ENCODE measurements at regions of chrX and their contacts with region 1.

Region 1: DNA sequence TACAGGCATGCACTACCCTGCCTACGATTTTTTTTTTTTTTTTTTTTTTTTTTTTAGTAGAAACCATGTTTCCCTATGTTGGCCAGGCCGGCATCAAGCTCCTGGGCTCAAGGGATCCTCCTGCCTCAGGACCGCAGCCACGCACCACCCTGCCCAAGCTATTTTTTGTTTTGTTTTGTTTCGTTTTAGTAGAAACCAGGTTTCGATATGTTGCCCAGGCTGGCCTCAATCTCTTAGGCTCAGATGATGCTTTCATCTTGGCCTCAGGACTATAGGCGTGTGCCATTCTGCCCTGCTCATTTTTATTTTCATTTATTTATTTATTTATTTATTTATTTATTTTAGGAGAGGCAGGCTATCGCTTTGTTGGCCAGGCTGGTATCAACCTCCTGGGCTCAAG is 1.2 kb upstream of the SSX3 start:
- DNase-seq: no peak
- H3K4me3 ChIP-seq: no peak overlapping the region
- H3K4me1 ChIP-seq: no peaks in the 10 kb centered on the region
- H3K27me3 ChIP-seq: no peaks in the 10 kb centered on the region; the same call in 1 of the 2 replicates

Region 2: DNA sequence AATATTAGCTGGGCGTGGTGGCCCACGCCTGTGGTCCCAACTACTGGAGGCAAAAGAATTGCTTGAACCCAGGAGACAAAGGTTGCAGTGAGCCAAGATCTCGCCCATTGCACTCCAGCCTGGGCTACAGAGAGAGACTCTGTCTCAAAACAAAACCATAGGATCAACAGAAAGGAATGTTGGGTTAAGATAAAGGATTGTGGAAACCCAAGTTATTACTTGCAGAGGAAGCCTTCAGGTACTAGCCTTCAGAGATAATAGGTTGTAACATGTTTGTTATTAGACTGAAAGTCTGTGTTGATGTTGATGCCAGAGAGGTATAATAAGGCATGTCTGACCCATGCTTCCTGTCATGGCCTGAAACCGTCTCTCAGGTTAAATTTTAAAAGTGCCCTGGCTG is 178.0 kb before region 1 on chrX:
- in situ Hi-C with region 1: no loop called
- DNase-seq: no peak
- H3K4me3 ChIP-seq: no peak overlapping the region
- H3K4me1 ChIP-seq: no peaks in the 10 kb centered on the region
- H3K27me3 ChIP-seq: no peaks in the 10 kb centered on the region

Region 3: DNA sequence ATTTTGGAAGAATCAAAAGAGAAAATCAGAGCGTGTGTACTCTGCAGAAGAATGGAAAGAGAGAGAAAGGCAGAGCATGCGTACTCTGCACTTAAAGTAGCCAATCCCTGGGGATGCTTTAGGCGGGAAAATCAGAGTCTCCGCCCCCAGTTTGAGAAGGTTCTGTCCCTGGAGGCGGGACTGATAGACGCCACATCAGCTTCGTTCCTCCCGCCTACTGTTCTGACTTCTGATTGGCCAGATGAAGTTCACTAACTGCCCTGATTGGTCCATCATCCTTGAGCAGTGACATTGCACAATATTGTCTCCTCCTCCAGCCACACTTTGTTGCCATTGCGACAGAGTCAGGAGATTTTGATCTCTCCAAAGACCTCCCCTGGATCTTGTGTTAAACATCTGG is 78.7 kb before region 1 on chrX:
- in situ Hi-C with region 1: loop called (anchors 25 kb)
- DNase-seq: peak in 1 of 2 experiments; percentile 31
- H3K4me3 ChIP-seq: no peak overlapping the region
- H3K4me1 ChIP-seq: no peaks in the 10 kb centered on the region
- H3K27me3 ChIP-seq: no peaks in the 10 kb centered on the region

Measured in HAP-1 (cell line).